PC-3 (cell line): ENCODE measurements at regions of chr5 and their contacts with region 1.

Region 1: DNA sequence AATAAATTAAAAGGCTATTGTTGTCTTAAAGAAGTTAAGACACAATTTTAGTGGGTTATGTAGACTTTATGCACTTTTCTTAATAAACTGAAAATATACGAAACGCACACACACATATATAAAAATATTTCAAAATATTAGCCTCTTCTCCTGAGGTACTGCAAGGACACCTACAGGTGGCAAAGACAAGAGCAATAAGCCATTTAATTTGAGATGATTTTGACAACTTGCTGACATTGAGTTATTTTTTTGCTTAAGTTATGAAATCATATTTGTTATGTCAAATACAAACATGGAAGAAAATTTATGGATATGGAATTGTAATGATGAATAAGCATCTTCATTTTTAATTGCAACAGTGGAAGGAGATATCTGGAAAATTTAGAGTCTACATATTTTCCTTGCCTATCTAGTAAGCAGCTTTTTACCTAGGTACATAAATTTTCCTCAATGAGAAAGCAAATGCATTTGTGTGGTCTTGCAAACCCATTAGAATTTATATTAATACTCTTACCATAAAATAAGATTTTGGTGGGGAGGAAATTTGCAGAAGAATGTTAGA is 301.6 kb downstream of the ISL1 start:
- DNase-seq: peak; percentile 9
- ATAC-seq: no peak
- H3K4me3 ChIP-seq: no peak overlapping the region
- H3K27ac ChIP-seq: no peak overlapping the region
- H3K4me1 ChIP-seq: no peaks in the 10 kb centered on the region; the same call in 1 of the 2 replicates
- H3K27me3 ChIP-seq: no peaks in the 10 kb centered on the region
- CTCF ChIP-seq: peak; percentile 57

Region 2: GRCh38 chr5:51712201-51712600 is 27.3 kb after region 1 on chr5:
- CTCF ChIA-PET with region 1: no interaction called
- POLR2A ChIA-PET with region 1: no interaction called
- intact Hi-C with region 1: no loop called
- DNase-seq: no peak
- ATAC-seq: no peak
- H3K4me3 ChIP-seq: no peak overlapping the region
- H3K27ac ChIP-seq: no peak overlapping the region
- H3K4me1 ChIP-seq: no peaks in the 10 kb centered on the region
- H3K27me3 ChIP-seq: no peaks in the 10 kb centered on the region
- CTCF ChIP-seq: no peak

Region 3: GRCh38 chr5:51846015-51846414 is 161.1 kb after region 1 on chr5:
- CTCF ChIA-PET with region 1: no interaction called
- POLR2A ChIA-PET with region 1: no interaction called
- intact Hi-C with region 1: loop called (anchors 10 kb)
- DNase-seq: peak; percentile 37
- ATAC-seq: no peak
- H3K4me3 ChIP-seq: no peak overlapping the region
- H3K27ac ChIP-seq: no peak overlapping the region
- H3K4me1 ChIP-seq: no peaks in the 10 kb centered on the region
- H3K27me3 ChIP-seq: no peaks in the 10 kb centered on the region
- CTCF ChIP-seq: no peak